Common myeloid progenitor, CD34-positive (primary cell): ENCODE measurements at regions of chr11 and their contacts with region 1.

Region 1: GRCh38 chr11:33912405-33913361 is 20.8 kb upstream of the LMO2 start:
- DNase-seq: peak; percentile 45 to 91 (median 85)
- H3K4me3 ChIP-seq: peak overlapping the region in 1 of 7 experiments; percentile 6
- H3K27ac ChIP-seq: peak overlapping the region; percentile 12 to 60
- H3K4me1 ChIP-seq: peaks cover 21 to 49% (median 32%) of the 10 kb centered on the region in 4 experiments
- H3K27me3 ChIP-seq: no peaks in the 10 kb centered on the region

Region 2: GRCh38 chr11:33829433-33830141 is 83.1 kb before region 1 on chr11:
- CTCF ChIA-PET with region 1: no interaction called
- POLR2A ChIA-PET with region 1: no interaction called
- DNase-seq: peak; percentile 73 to 86 (median 83)
- H3K4me3 ChIP-seq: peak overlapping the region in 6 of 7 experiments; percentile 20 to 75 (median 58)
- H3K27ac ChIP-seq: no peak overlapping the region
- H3K4me1 ChIP-seq: peaks cover 0 to 12% (median 8%) of the 10 kb centered on the region in 4 experiments
- H3K27me3 ChIP-seq: peaks cover 9 to 35% (median 17%) of the 10 kb centered on the region in 5 experiments

Region 3: DNA sequence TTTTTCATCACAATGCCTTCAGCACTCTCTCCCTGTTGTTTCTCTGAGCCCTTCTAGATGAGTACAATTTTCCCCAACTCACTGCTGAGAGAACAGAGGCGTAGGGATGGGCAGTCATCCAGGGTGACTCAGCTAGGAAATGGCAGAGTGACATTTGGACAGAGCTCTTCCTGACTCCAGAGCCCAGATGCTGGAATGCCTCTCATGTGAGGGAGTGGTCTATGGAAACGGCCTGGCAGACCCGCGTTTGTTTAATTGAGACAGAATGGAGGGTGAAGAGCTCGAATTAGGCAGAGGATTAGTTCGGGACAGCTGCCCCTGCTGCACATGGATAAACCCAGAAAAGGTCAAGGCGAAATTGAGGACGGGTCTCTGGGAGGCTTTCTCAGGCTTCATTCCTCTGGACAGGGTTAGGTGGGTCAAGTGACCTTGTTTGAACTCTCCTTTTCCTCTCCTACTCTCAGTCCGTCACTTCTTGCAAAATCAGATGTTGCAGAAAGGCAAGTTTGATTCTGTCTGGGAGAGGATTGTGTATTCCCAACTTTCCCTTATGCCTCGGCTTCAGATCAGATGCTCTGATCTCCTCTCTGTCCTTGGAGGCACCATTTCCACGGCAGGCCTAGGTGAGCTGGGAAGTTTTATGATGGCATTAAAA is 13.2 kb before region 1 on chr11:
- CTCF ChIA-PET with region 1: interaction called, 20 read pairs
- POLR2A ChIA-PET with region 1: interaction called, 5 read pairs
- DNase-seq: peak in 1 of 3 donors; percentile 39
- H3K4me3 ChIP-seq: peak overlapping the region in 1 of 7 experiments; percentile 24
- H3K27ac ChIP-seq: no peak overlapping the region
- H3K4me1 ChIP-seq: peaks cover 32 to 68% (median 64%) of the 10 kb centered on the region in 4 experiments
- H3K27me3 ChIP-seq: no peaks in the 10 kb centered on the region

Region 4: DNA sequence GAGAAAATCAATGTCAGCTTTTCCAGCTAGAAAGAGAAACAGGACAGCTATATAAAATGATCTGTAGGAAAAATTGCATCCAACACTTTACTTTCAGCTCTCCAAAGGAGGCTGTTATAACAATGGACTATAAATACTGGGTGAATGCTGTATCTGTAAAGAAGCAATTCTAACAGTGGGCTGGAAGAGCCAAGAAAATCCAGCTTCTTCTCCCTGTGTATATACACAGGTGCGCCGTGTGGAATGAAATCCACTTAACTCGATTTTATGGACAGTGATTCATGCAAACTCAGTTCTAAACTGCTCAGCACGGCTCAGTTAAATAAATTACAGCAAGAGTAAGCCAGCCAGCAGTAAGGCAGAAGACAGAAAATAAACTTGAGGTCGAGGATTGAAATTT is 11.7 kb after region 1 on chr11:
- CTCF ChIA-PET with region 1: interaction called, 89 read pairs
- POLR2A ChIA-PET with region 1: interaction called, 4 read pairs
- DNase-seq: no peak
- H3K4me3 ChIP-seq: no peak overlapping the region
- H3K27ac ChIP-seq: no peak overlapping the region
- H3K4me1 ChIP-seq: peaks cover 8 to 51% (median 32%) of the 10 kb centered on the region in 4 experiments
- H3K27me3 ChIP-seq: no peaks in the 10 kb centered on the region

Region 5: DNA sequence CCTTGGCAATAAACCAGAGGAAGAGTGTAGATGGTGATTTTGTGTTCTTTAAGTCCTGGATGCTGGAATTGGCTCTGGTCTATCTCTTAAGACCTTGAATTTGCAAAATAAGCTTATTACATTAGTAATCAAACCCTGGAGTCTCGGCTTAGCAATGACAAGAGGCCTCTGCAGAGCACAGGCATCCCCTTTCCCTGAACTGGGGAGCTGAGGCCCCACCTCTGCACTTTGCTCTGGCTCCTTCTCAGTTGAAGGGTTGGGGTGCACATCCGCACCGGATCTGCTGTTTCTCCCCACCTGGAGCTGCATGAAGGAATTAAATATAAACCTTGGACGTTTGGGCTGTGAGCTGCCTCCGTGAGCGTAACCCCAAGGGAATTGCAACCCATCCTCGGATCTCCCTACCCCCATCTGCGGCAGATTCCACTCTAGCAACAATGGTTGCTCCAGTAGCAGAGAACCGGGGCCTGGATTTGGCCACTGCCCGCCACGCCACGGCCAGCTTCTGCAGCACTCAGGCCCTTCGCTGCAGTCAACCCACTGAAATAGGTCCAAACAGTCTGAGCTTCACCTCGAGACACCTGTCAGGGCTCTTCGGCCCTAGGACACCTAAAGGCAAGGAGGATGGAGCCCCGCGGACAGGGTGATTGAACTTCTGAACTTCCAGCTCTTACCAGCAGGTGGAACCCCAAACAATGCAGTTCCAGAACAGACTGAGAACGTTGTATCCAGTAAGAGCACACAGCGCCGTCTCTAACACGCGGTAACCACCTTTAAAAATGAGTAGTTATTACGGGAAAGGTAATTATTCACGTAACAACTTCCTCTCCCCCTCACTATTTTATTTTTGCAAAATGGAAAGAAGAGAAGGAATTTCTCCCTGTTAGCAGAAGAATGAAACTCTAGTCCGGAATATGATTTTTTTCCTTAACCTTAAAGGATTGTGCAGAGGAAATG is 84.1 kb after region 1 on chr11:
- CTCF ChIA-PET with region 1: no interaction called
- POLR2A ChIA-PET with region 1: no interaction called
- DNase-seq: peak; percentile 72 to 85 (median 81)
- H3K4me3 ChIP-seq: peak overlapping the region in 4 of 7 experiments; percentile 5 to 54 (median 32)
- H3K27ac ChIP-seq: no peak overlapping the region
- H3K4me1 ChIP-seq: peaks cover 0 to 8% (median 7%) of the 10 kb centered on the region in 4 experiments
- H3K27me3 ChIP-seq: peaks cover 0 to 8% (median 4%) of the 10 kb centered on the region in 5 experiments